Activated T-helper 2 cell treated with anti-CD3 and anti-CD28 coated beads, Interferon-gamma antibody, Interleukin-2, Interleukin-4, amounts not matched to agents 10 μg/mL and 5 μg/mL and 100 μg/mL, durations not matched to agents 14 hours and 24 hours and 36 hours (primary cell): ENCODE measurements at regions of chr7 and their contacts with region 1.

Region 1: GRCh38 chr7:6256677-6257535 is 15.5 kb downstream of the CYTH3 start:
- DNase-seq: no peak
- H3K4me3 Mint-ChIP-seq: no peak overlapping the region
- H3K27ac Mint-ChIP-seq: no peak overlapping the region
- H3K4me1 Mint-ChIP-seq: peaks cover 21% of the 10 kb centered on the region
- H3K27me3 Mint-ChIP-seq: peaks cover 64% of the 10 kb centered on the region

Region 2: GRCh38 chr7:6205971-6206660 is 50.8 kb before region 1 on chr7:
- intact Hi-C with region 1: no loop called
- DNase-seq: no peak
- H3K4me3 Mint-ChIP-seq: no peak overlapping the region
- H3K27ac Mint-ChIP-seq: no peak overlapping the region
- H3K4me1 Mint-ChIP-seq: no peaks in the 10 kb centered on the region
- H3K27me3 Mint-ChIP-seq: peaks cover 18% of the 10 kb centered on the region

Region 3: DNA sequence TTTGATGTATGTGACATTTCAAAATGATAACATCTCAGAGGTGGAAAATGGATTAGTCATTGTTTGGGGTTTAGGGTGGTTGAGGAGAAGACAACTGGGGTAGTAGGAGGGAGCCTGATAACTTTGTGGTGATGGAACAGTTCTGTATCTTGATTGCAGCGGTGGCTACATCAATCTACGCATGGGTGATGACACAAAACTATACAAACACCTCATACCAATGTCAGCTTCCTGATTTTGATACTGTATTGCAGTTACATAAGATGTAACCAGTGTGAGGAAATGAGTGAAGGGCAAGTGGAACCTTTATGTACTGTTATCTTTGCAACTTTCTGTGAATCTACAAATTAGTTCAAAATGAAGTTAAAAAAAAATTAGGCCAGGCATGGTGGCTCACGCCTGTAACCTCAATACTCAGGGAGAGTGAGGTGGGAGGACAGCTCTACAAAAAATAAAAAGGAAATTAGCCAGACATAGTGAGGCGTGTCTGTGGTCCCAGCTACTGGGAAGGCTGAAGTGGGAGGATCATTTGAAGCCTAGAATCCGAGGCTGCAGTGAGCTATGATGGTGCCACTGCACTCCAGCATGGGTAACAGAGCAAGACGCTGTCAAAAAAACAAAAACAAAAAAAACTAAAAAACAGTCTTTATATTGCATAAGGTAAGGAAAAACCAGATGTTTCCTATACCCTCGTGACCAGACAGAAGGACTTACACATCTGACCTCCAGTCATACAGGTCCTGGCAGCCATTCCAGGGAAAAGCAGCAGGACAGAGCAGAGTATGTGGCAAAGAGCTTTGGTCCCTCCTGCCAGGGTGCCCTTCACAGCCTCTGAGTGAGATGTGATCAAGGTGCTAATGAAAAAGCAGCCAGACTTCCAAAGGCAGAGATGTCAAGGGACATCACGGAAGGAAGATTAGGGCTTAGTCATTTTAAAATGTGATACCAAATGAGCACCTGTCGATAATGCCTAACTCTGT is 35.3 kb before region 1 on chr7:
- intact Hi-C with region 1: loop called (anchors 1 kb)
- DNase-seq: peak; percentile 15
- H3K4me3 Mint-ChIP-seq: no peak overlapping the region
- H3K27ac Mint-ChIP-seq: peak overlapping the region; percentile 43
- H3K4me1 Mint-ChIP-seq: peaks cover 9% of the 10 kb centered on the region
- H3K27me3 Mint-ChIP-seq: peaks cover 45% of the 10 kb centered on the region

Region 4: GRCh38 chr7:6271060-6271658 is 14.3 kb after region 1 on chr7:
- intact Hi-C with region 1: loop called (anchors 1 kb)
- DNase-seq: no peak
- H3K4me3 Mint-ChIP-seq: peak overlapping the region; percentile 76
- H3K27ac Mint-ChIP-seq: no peak overlapping the region
- H3K4me1 Mint-ChIP-seq: peaks cover 18% of the 10 kb centered on the region
- H3K27me3 Mint-ChIP-seq: peaks cover 71% of the 10 kb centered on the region

Region 5: DNA sequence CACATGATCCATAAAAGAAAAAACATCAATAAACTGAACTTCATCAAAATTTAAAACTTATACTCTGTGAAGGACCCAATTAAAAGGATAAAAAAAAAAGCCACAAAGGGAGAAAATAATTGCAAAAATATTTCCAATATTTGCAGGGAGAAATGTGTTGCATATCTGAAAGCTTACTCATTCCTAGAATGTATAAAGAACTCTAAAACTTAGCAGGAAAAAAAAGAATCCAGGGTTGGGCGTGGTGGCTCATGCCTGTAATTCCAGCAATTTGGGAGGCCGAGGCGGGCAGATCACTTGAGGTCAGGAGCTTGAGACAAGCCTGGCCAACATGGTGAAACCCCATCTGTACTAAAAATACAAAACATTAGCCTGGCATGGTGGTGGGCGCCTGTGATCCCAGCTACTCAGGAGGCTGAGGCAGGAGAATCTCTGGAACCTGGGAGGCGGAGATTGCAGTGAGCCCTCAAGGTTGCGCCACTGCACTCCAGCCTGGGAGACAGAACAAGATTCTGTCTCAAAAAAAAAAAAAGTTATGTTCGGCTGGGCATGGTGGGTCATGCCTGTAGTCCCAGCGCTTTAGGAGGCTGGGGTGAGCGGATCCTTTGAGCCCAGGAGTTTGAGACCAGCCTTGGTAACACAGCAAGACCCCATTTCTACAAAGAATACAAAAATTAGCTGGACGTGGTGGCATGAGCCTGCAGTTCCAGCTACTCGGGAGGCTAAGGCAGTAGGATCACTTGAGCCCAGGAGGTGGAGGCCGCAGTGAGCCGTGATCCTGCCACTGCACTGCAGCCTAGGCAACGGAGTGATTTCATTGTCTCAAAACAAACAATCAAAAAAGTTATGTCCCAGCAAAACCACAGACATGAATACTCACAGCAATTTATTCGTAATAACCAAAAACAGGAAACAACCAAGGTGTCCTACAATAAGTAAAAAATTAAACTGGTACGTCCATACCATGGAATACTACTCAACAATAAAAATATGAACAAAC is 26.8 kb after region 1 on chr7:
- intact Hi-C with region 1: no loop called
- DNase-seq: no peak
- H3K4me3 Mint-ChIP-seq: no peak overlapping the region
- H3K27ac Mint-ChIP-seq: no peak overlapping the region
- H3K4me1 Mint-ChIP-seq: no peaks in the 10 kb centered on the region
- H3K27me3 Mint-ChIP-seq: no peaks in the 10 kb centered on the region